ENCODE measurements at regions of chr1 and their contacts with region 1.

Region 1: DNA sequence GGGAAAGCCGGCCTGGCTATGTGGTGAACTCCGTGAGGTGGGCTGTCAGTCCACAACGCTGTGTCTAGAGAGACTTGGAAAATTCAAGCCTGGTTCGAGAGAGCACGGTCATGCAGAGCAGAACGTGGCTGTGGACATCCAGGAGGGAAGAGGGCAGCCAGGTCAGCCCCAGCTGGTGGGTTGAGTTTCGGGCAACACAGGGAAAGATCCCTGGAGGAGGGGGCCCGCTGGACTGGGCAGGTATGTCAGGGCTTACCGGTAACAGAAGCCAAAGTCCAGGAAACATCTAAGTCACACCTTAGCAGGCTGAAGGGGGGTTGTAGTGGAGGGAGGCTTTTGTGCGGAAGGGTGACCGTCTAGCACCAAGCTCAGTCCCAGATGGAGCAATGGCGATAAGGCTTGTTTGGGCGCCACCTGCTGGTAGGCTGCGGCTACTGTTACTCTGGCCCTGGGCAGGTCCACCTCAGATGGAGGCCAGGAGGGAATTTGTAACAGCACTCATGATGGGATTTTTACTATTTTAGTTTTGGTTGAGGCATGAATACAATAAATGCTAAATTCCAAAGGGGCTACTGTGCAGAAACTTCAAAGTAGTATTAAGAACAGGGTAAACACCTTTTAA is 143.3 kb upstream of the ZNF644 start:
- DNase-seq: peak; percentile 81
- ATAC-seq: peak; percentile 95
- H3K4me3 Mint-ChIP-seq: no peak overlapping the region
- H3K27ac Mint-ChIP-seq: no peak overlapping the region
- H3K4me1 Mint-ChIP-seq: no peaks in the 10 kb centered on the region
- H3K27me3 Mint-ChIP-seq: peaks cover 4% of the 10 kb centered on the region
- CTCF ChIP-seq: peak; percentile 92

Region 2: GRCh38 chr1:90579212-90579802 is 585.8 kb before region 1 on chr1:
- CTCF ChIA-PET with region 1: interaction called, 32 read pairs
- POLR2A ChIA-PET with region 1: no interaction called
- intact Hi-C with region 1: loop called (anchors 5 kb)
- DNase-seq: no peak
- ATAC-seq: no peak
- H3K4me3 Mint-ChIP-seq: no peak overlapping the region
- H3K27ac Mint-ChIP-seq: no peak overlapping the region
- H3K4me1 Mint-ChIP-seq: no peaks in the 10 kb centered on the region
- H3K27me3 Mint-ChIP-seq: peaks cover 1% of the 10 kb centered on the region
- CTCF ChIP-seq: peak; percentile 75

Region 3: GRCh38 chr1:91021686-91022517 is 143.2 kb before region 1 on chr1 and contains the start of gene ZNF644:
- CTCF ChIA-PET with region 1: interaction called, 11 read pairs
- POLR2A ChIA-PET with region 1: no interaction called
- intact Hi-C with region 1: no loop called
- DNase-seq: peak; percentile 96
- ATAC-seq: peak; percentile 88
- H3K4me3 Mint-ChIP-seq: peak within 1 kb of the TSS; percentile 99
- H3K27ac Mint-ChIP-seq: peak within 1 kb of the TSS; percentile 99
- H3K4me1 Mint-ChIP-seq: peaks cover 51% of the 10 kb centered on the region
- H3K27me3 Mint-ChIP-seq: no peaks in the 10 kb centered on the region
- CTCF ChIP-seq: no peak
- total RNA-seq, gene ZNF644: 43.4 to 44.9 TPM

Region 4: GRCh38 chr1:91148641-91149069 is 16.5 kb before region 1 on chr1:
- CTCF ChIA-PET with region 1: interaction called, 33 read pairs
- POLR2A ChIA-PET with region 1: no interaction called
- intact Hi-C with region 1: no loop called
- DNase-seq: no peak
- ATAC-seq: no peak
- H3K4me3 Mint-ChIP-seq: no peak overlapping the region
- H3K27ac Mint-ChIP-seq: no peak overlapping the region
- H3K4me1 Mint-ChIP-seq: no peaks in the 10 kb centered on the region
- H3K27me3 Mint-ChIP-seq: peaks cover 6% of the 10 kb centered on the region
- CTCF ChIP-seq: no peak

Region 5: GRCh38 chr1:91282695-91283420 is 117.7 kb after region 1 on chr1:
- CTCF ChIA-PET with region 1: interaction called, 31 read pairs
- POLR2A ChIA-PET with region 1: no interaction called
- intact Hi-C with region 1: loop called (anchors 5 kb)
- DNase-seq: peak; percentile 60
- ATAC-seq: no peak
- H3K4me3 Mint-ChIP-seq: no peak overlapping the region
- H3K27ac Mint-ChIP-seq: no peak overlapping the region
- H3K4me1 Mint-ChIP-seq: no peaks in the 10 kb centered on the region
- H3K27me3 Mint-ChIP-seq: peaks cover 8% of the 10 kb centered on the region
- CTCF ChIP-seq: peak; percentile 84

Region 6: DNA sequence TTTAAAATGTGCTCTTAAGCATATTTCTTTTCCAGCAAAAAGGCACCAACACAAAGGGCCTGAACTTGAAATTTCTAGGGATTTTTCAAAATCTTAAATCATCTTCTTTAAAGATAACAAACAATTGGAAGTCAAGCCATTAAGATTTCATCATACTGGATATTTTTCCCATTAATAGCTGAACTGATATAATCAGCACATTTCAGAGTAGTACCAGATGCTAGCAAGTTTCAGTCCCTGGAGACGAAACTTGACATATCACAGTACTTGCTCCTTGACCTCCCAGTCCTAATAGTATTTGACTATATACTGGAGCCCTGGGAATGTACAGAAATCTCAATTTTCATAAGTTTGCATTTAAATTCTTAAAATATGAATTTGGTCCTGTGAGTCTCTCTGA is 325.4 kb after region 1 on chr1:
- CTCF ChIA-PET with region 1: no interaction called
- POLR2A ChIA-PET with region 1: no interaction called
- intact Hi-C with region 1: no loop called
- DNase-seq: no peak
- ATAC-seq: no peak
- H3K4me3 Mint-ChIP-seq: no peak overlapping the region
- H3K27ac Mint-ChIP-seq: no peak overlapping the region
- H3K4me1 Mint-ChIP-seq: peaks cover 6% of the 10 kb centered on the region
- H3K27me3 Mint-ChIP-seq: peaks cover 3% of the 10 kb centered on the region
- CTCF ChIP-seq: no peak

Region 7: DNA sequence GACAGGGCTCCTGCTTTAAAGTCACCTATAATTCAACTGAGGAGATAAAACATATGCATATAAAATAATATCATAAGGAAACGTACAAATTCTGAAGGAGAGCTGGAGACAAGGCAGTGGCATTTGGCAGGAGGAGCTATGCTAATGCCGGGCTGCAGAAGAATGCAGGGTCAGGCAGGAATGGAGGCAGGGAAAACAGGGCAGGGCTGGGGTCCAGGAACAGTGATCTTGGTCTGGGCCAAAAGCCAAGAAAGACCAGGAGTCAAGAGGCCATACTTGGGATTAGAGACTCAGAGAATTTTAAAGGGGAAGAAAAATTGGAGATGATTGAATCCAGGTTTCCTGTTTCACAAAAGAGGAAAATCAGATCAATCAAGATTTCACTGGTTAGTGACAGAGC is 764.1 kb after region 1 on chr1:
- CTCF ChIA-PET with region 1: interaction called, 9 read pairs
- POLR2A ChIA-PET with region 1: no interaction called
- intact Hi-C with region 1: loop called (anchors 5 kb)
- DNase-seq: no peak
- ATAC-seq: no peak
- H3K4me3 Mint-ChIP-seq: no peak overlapping the region
- H3K27ac Mint-ChIP-seq: no peak overlapping the region
- H3K4me1 Mint-ChIP-seq: peaks cover 1% of the 10 kb centered on the region
- H3K27me3 Mint-ChIP-seq: no peaks in the 10 kb centered on the region
- CTCF ChIP-seq: no peak